OCI-LY7 (cell line): ENCODE measurements at regions of chrX and their contacts with region 1.

Region 1: DNA sequence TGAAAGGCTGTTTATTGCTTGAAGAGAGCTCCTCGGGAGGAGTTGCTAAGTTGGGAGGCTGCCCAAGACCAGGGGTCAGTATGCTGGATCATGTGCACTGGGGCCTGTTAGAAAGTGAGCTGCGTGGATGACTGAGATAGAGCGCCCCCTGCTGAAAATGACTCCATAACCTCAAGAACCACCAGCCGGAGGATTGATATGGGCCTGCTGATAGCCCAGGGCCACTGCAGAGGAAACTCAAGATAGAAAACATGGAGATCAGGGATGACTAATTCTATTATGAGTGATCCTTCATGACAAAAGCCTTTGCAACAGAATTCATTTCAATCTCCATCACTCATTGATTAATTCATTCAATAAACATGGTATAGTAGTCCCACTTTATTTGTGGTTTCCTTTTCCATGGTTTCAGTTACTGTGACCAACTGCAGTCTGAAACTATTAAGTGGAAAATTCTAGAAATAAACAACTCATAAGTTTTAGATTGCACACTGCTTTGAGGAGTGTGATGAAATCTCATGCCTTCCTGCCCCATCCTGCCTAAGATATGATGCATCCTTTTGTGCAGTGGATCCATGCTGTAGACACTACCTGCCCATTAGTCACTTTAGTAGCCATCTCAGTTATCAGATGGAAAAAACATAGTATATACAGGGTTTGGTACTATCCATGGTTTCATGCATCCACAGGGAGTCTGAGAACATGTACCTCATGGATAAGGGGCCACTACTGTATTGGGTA is 126.7 kb upstream of the MBNL3 start:
- DNase-seq: peak; percentile 47
- H3K4me3 ChIP-seq: no peak overlapping the region
- H3K27ac ChIP-seq: no peak overlapping the region
- H3K4me1 ChIP-seq: no peaks in the 10 kb centered on the region
- CTCF ChIP-seq: peak; percentile 73

Region 2: GRCh38 chrX:131841496-131842410 is 773.8 kb before region 1 on chrX:
- CTCF ChIA-PET with region 1: no interaction called
- POLR2A ChIA-PET with region 1: no interaction called
- intact Hi-C with region 1: loop called (anchors 10 kb)
- DNase-seq: peak; percentile 52
- H3K4me3 ChIP-seq: no peak overlapping the region
- H3K27ac ChIP-seq: no peak overlapping the region
- H3K4me1 ChIP-seq: no peaks in the 10 kb centered on the region
- CTCF ChIP-seq: peak; percentile 75

Region 3: GRCh38 chrX:132092439-132093065 is 523.0 kb before region 1 on chrX:
- CTCF ChIA-PET with region 1: interaction called, 3 read pairs
- POLR2A ChIA-PET with region 1: no interaction called
- intact Hi-C with region 1: loop called (anchors 10 kb)
- DNase-seq: peak; percentile 51
- H3K4me3 ChIP-seq: no peak overlapping the region
- H3K27ac ChIP-seq: no peak overlapping the region
- H3K4me1 ChIP-seq: no peaks in the 10 kb centered on the region
- CTCF ChIP-seq: peak; percentile 71

Region 4: DNA sequence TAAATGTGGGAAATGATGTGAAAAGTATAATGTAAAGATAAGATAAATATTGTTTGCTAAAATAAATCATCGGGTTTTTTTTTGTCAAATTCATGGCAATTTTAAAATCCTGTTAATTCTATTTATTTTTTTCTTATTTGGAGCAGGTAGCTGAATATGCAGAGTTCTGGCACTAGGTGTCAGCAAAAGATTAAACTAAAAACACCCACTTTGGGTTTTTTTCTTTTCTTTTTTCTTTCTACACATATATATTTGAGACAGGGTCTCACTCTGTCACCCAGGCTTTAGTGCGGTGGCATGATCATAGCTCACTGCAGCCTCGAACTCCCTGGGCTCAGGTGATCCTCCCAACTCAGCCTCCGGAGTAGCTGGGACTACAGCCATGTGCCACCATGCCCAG is 389.4 kb before region 1 on chrX:
- CTCF ChIA-PET with region 1: no interaction called
- POLR2A ChIA-PET with region 1: no interaction called
- intact Hi-C with region 1: loop called (anchors 1 kb)
- DNase-seq: peak; percentile 2
- H3K4me3 ChIP-seq: no peak overlapping the region
- H3K27ac ChIP-seq: no peak overlapping the region
- H3K4me1 ChIP-seq: no peaks in the 10 kb centered on the region
- CTCF ChIP-seq: peak; percentile 71

Region 5: DNA sequence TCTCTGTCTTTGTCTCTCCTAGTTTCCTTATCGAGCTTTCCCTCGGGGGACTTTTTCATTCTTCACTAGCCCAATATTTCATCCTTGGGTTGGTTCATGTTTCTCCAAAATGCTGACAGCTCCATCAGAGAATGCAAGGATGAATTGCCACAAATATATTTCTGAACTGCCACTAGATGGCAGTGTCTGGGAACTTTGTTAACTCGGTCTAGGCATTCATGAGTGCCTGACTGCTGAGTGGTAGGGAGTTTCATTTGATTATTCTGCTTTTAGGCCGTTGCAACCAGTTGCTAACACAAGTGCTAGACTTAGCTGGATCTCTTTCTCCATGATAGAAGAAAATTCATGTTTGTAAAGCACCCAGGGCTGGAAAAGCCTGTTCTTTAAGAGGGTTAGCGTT is 322.8 kb before region 1 on chrX:
- CTCF ChIA-PET with region 1: interaction called, 3 read pairs
- POLR2A ChIA-PET with region 1: no interaction called
- intact Hi-C with region 1: loop called (anchors 1 kb)
- DNase-seq: peak; percentile 61
- H3K4me3 ChIP-seq: no peak overlapping the region
- H3K27ac ChIP-seq: no peak overlapping the region
- H3K4me1 ChIP-seq: no peaks in the 10 kb centered on the region
- CTCF ChIP-seq: peak; percentile 74

Region 6: GRCh38 chrX:132488819-132489577 is 126.6 kb before region 1 on chrX and contains the start of gene MBNL3:
- CTCF ChIA-PET with region 1: no interaction called
- POLR2A ChIA-PET with region 1: no interaction called
- intact Hi-C with region 1: loop called (anchors 10 kb)
- DNase-seq: peak; percentile 90
- H3K4me3 ChIP-seq: peak within 1 kb of the TSS; percentile 78
- H3K27ac ChIP-seq: peak within 1 kb of the TSS; percentile 100
- H3K4me1 ChIP-seq: peaks cover 35% of the 10 kb centered on the region
- CTCF ChIP-seq: no peak
- total RNA-seq, gene MBNL3: 31.4 and 39.4 TPM in 2 replicates

Region 7: GRCh38 chrX:132636080-132636479 is 20.5 kb after region 1 on chrX:
- CTCF ChIA-PET with region 1: no interaction called
- POLR2A ChIA-PET with region 1: no interaction called
- intact Hi-C with region 1: no loop called
- DNase-seq: no peak
- H3K4me3 ChIP-seq: no peak overlapping the region
- H3K27ac ChIP-seq: no peak overlapping the region
- H3K4me1 ChIP-seq: no peaks in the 10 kb centered on the region
- CTCF ChIP-seq: peak; percentile 48; the same call in 1 of the 2 replicates